Activated naive CD4-positive, alpha-beta T cell treated with anti-CD3 and anti-CD28 coated beads for 36 hours (primary cell): ENCODE measurements at regions of chr3 and their contacts with region 1.

Region 1: GRCh38 chr3:14431892-14432834 is 29.8 kb downstream of the SLC6A6 start:
- DNase-seq: peak; percentile 98
- H3K4me3 Mint-ChIP-seq: peak overlapping the region; percentile 66
- H3K27ac Mint-ChIP-seq: peak overlapping the region; percentile 94
- H3K4me1 Mint-ChIP-seq: peaks cover 76% of the 10 kb centered on the region
- H3K27me3 Mint-ChIP-seq: no peaks in the 10 kb centered on the region

Region 2: GRCh38 chr3:13419505-13420044 is 1012.6 kb before region 1 on chr3:
- CTCF ChIA-PET with region 1: no interaction called
- intact Hi-C with region 1: loop called (anchors 1 kb)
- DNase-seq: peak; percentile 52
- H3K4me3 Mint-ChIP-seq: peak overlapping the region; percentile 92
- H3K27ac Mint-ChIP-seq: peak overlapping the region; percentile 93
- H3K4me1 Mint-ChIP-seq: peaks cover 70% of the 10 kb centered on the region
- H3K27me3 Mint-ChIP-seq: no peaks in the 10 kb centered on the region

Region 3: DNA sequence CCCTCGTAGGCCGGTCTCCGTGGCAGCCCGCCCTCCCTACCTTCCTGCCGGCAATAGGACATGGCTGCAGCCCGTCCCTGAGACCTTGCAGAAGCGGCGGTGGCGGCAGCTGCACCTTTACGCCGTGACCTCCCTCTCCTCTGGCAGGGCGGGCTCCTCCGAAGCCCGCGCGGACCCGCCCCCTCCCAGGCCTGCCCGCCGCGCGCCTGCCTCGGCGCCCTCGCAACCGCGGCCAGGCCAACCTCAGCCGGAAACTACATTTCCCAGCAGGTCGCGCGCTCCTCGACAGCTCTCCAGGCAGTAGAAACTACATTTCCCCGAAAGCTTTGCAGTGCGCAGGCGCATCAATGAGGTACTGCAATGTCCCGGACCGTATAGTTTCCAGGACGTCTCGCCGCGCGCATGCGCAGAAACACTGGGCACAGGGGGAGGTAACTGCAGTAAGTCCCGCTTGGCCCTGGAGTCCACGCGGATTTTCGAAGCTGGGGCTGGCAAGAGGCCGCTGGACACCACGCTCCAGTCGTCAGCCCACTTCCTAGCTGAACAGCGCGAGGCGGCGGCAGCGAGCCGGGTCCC is 307.5 kb before region 1 on chr3 and contains the starts of genes CHCHD4 and TMEM43:
- CTCF ChIA-PET with region 1: no interaction called
- intact Hi-C with region 1: loop called (anchors 1 kb)
- DNase-seq: peak; percentile 99
- H3K4me3 Mint-ChIP-seq: peak within 1 kb of the TSS; percentile 93
- H3K27ac Mint-ChIP-seq: peak within 1 kb of the TSS; percentile 92
- H3K4me1 Mint-ChIP-seq: peaks cover 50% of the 10 kb centered on the region
- H3K27me3 Mint-ChIP-seq: no peaks in the 10 kb centered on the region
- total RNA-seq, gene CHCHD4: 16.2 to 17.9 TPM
- total RNA-seq, gene TMEM43: 18.3 to 19.8 TPM

Region 4: GRCh38 chr3:14144423-14145075 is 287.6 kb before region 1 on chr3:
- CTCF ChIA-PET with region 1: no interaction called
- intact Hi-C with region 1: loop called (anchors 2 kb)
- DNase-seq: peak; percentile 70
- H3K4me3 Mint-ChIP-seq: peak overlapping the region; percentile 19
- H3K27ac Mint-ChIP-seq: peak overlapping the region; percentile 81
- H3K4me1 Mint-ChIP-seq: peaks cover 48% of the 10 kb centered on the region
- H3K27me3 Mint-ChIP-seq: no peaks in the 10 kb centered on the region

Region 5: DNA sequence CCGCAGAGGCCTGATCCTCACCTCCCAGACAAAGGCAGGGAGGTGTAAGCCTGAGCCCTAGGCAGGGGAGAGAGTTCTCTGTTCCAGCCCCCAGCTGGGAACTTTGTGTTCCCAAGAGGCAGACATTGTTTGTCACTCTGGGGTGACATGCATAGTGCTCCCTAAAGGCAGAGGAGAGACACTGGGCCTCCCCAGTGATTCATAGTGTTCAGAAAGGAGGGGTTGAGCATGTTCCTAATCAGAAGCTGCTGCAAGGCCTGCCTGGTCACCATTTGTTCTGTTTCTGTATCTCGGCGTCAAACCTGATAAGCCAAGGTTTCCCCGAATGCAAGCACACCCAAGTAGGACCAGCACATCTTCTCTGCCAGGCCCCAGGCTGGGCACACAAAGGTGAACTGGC is 53.7 kb before region 1 on chr3:
- CTCF ChIA-PET with region 1: no interaction called
- intact Hi-C with region 1: no loop called
- DNase-seq: peak; percentile 15
- H3K4me3 Mint-ChIP-seq: no peak overlapping the region
- H3K27ac Mint-ChIP-seq: no peak overlapping the region
- H3K4me1 Mint-ChIP-seq: peaks cover 13% of the 10 kb centered on the region
- H3K27me3 Mint-ChIP-seq: no peaks in the 10 kb centered on the region

Region 6: GRCh38 chr3:14461748-14462324 is 29.7 kb after region 1 on chr3:
- CTCF ChIA-PET with region 1: interaction called, 3 read pairs
- intact Hi-C with region 1: loop called (anchors 1 kb)
- DNase-seq: peak; percentile 77
- H3K4me3 Mint-ChIP-seq: no peak overlapping the region
- H3K27ac Mint-ChIP-seq: peak overlapping the region; percentile 59
- H3K4me1 Mint-ChIP-seq: peaks cover 36% of the 10 kb centered on the region
- H3K27me3 Mint-ChIP-seq: no peaks in the 10 kb centered on the region